Motor neuron (in vitro differentiated cells): ENCODE measurements at regions of chr22 and their contacts with region 1.

Region 1: GRCh38 chr22:17411213-17411612 is 42.0 kb downstream of the CECR2 start:
- ATAC-seq: peak in 2 of 8 experiments; percentile 37 to 41
- H3K4me3 ChIP-seq: no peak overlapping the region
- H3K27ac ChIP-seq: no peak overlapping the region
- H3K4me1 ChIP-seq: peaks cover 13% of the 10 kb centered on the region in 2 donors

Region 2: DNA sequence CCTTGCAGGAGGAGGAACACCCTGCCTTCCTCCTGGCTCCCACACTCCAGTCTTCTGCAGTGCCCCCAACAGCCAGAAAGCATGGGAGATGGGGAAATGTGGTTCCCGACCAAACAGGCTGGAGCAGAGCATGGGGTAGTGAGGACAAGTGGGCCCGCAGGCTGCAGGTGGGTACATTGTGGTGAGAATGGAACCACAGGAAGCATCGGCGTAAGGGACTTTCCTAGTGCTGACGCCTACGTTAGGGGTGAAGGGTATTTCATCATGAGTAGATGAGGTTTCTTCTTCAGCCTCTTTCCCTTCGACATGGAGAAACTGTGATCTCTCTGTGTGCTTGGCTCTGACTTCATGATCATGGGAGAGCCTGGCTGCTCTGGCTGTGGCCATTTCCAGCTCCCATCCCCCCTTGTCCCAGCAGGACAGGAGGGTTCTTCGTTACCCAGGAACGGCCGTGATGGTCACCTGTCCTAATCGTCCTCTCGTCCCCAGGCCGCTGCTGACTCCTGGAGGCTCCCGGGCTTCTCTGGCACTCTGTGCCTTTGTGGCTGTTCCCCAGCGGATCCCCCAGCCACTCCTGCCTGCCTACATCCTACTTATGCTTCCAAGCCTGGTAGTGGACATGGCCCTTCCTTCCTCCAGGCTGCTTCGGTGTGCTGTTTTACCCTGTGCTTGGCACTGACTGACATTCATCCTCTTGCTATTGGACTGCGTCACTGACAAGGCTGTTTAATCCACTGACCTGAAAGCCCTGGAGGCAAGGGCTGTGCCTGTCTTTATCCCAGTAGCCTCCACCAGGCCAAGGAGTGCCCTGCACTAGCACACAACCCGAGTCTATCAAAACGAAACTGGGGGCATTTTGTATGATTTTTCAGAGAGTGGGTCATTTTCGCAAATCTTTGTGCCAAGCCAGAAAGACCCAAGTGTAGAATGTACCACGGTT is 107.1 kb before region 1 on chr22:
- in situ Hi-C with region 1: loop called in 1 of 9 experiments (anchors 25 kb)
- ATAC-seq: peak in 1 of 8 experiments; percentile 74
- H3K4me3 ChIP-seq: no peak overlapping the region
- H3K27ac ChIP-seq: no peak overlapping the region
- H3K4me1 ChIP-seq: no peaks in the 10 kb centered on the region